ENCODE measurements at regions of chr6 and their contacts with region 1.

Region 1: DNA sequence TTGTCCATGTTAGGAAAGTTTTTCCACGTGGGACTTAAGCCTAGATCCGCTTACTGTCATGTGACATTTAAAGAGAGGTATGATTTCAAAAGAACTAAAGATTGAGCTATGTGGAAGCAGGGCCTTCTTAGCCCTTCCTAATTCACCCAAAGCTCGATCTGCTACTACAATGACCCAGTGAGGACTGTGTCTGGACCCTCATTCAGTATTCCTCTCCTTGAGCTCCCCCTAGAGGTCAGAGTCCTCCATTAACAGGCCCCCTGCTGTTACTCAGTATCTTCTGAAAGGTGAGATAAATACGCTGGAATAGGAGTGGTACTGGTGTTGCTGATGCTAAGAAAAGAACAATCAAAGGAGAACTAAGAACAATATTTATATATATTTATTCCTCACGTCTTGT is 414.0 kb downstream of the GJA1 start:
- DNase-seq: peak; percentile 79
- H3K4me3 Mint-ChIP-seq: no peak overlapping the region
- H3K27ac Mint-ChIP-seq: no peak overlapping the region
- H3K4me1 Mint-ChIP-seq: no peaks in the 10 kb centered on the region
- H3K27me3 Mint-ChIP-seq: no peaks in the 10 kb centered on the region
- CTCF ChIP-seq: peak; percentile 76

Region 2: GRCh38 chr6:121430514-121431460 is 418.7 kb before region 1 on chr6:
- CTCF ChIA-PET with region 1: interaction called, 3 read pairs
- intact Hi-C with region 1: loop called (anchors 1 kb)
- DNase-seq: peak; percentile 23
- H3K4me3 Mint-ChIP-seq: no peak overlapping the region
- H3K27ac Mint-ChIP-seq: peak overlapping the region; percentile 7
- H3K4me1 Mint-ChIP-seq: peaks cover 27% of the 10 kb centered on the region
- H3K27me3 Mint-ChIP-seq: no peaks in the 10 kb centered on the region
- CTCF ChIP-seq: no peak

Region 3: DNA sequence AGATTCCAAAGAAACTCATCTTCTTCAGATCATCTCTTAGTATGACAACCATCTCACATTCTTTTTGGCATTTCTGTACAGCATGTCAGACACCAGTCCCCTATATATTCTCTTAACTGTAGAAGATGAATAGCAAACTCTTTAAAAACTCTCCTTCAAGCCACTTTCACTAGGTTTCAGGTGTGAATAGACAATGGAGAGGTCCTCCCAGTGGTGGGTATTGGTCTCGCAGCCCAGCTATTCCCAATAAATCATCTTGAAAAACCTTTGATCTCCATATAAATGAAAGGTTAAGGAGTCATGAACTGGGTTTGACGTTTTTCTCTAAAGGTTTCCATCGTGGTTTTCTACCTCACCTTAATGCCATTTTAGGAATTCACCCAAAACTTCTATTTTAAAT is 234.0 kb before region 1 on chr6:
- CTCF ChIA-PET with region 1: interaction called, 3 read pairs
- intact Hi-C with region 1: loop called (anchors 10 kb)
- DNase-seq: peak; percentile 18
- H3K4me3 Mint-ChIP-seq: no peak overlapping the region
- H3K27ac Mint-ChIP-seq: no peak overlapping the region
- H3K4me1 Mint-ChIP-seq: peaks cover 12% of the 10 kb centered on the region
- H3K27me3 Mint-ChIP-seq: no peaks in the 10 kb centered on the region
- CTCF ChIP-seq: peak; percentile 27

Region 4: GRCh38 chr6:122033539-122034181 is 184.2 kb after region 1 on chr6:
- CTCF ChIA-PET with region 1: no interaction called
- intact Hi-C with region 1: loop called (anchors 1 kb)
- DNase-seq: peak; percentile 9
- H3K4me3 Mint-ChIP-seq: no peak overlapping the region
- H3K27ac Mint-ChIP-seq: no peak overlapping the region
- H3K4me1 Mint-ChIP-seq: peaks cover 12% of the 10 kb centered on the region
- H3K27me3 Mint-ChIP-seq: no peaks in the 10 kb centered on the region
- CTCF ChIP-seq: no peak

Region 5: GRCh38 chr6:122677406-122677805 is 827.9 kb after region 1 on chr6:
- CTCF ChIA-PET with region 1: interaction called, 10 read pairs
- intact Hi-C with region 1: no loop called
- DNase-seq: no peak
- H3K4me3 Mint-ChIP-seq: no peak overlapping the region
- H3K27ac Mint-ChIP-seq: no peak overlapping the region
- H3K4me1 Mint-ChIP-seq: peaks cover 19% of the 10 kb centered on the region
- H3K27me3 Mint-ChIP-seq: no peaks in the 10 kb centered on the region
- CTCF ChIP-seq: no peak

Measured in Calu3 (cell line).